GM13977 (cell line): ENCODE measurements at regions of chr11 and their contacts with region 1.

Region 1: GRCh38 chr11:34926101-34926830 is 9.8 kb downstream of the PDHX start:
- DNase-seq: peak; percentile 12
- CTCF ChIP-seq: peak; percentile 72

Region 2: GRCh38 chr11:34997952-34998528 is 71.8 kb after region 1 on chr11:
- in situ Hi-C with region 1: loop called (anchors 10 kb)
- DNase-seq: peak; percentile 13
- CTCF ChIP-seq: peak; percentile 42

Region 3: GRCh38 chr11:35391922-35392813 is 465.9 kb after region 1 on chr11:
- in situ Hi-C with region 1: loop called (anchors 10 kb)
- DNase-seq: peak; percentile 67
- CTCF ChIP-seq: peak; percentile 94